Activated naive CD4-positive, alpha-beta T cell treated with anti-CD3 and anti-CD28 coated beads for 36 hours (primary cell): ENCODE measurements at regions of chr7 and their contacts with region 1.

Region 1: GRCh38 chr7:129163875-129164544 is 19.5 kb downstream of the TSPAN33 start:
- DNase-seq: peak; percentile 21
- H3K4me3 Mint-ChIP-seq: no peak overlapping the region
- H3K27ac Mint-ChIP-seq: no peak overlapping the region
- H3K4me1 Mint-ChIP-seq: peaks cover 4% of the 10 kb centered on the region
- H3K27me3 Mint-ChIP-seq: no peaks in the 10 kb centered on the region

Region 2: DNA sequence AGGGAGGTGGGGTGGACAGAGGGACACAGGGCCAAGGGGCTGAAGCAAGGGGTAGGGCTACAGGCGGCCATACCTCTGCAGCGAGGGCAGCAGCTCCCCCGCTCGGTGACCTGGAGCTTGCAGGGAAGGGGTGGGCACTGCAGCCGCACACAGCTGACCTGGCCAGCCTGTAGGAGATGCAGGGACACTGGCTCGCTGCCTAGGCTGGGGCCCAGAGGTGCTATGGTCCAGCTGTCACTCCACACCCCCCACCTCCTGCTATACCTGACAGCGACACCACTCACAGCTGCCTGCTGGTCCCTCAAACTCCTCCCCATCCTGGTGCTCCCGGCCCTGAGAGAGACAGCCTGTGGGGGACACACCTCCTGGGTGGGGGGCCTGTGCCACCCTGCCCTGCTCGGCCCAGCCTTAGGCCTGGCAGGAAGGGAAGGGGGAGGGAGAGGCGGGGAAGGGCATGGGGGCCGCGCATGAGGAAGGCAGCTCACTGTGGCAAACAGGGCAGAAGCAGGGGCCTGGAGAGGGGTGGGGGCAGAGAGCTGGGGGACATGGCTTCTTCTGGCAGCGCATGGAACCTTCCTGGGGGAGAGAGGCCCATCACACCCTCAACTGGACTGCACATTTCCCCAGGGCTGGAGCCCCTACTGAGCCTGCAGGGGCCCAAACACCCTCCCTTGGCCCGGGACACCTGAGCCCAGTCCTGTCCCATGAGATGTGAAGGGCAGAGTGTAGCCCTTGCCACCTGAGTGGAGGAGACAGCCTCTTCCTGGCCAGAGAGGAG is 277.4 kb before region 1 on chr7:
- CTCF ChIA-PET with region 1: no interaction called
- intact Hi-C with region 1: no loop called
- DNase-seq: no peak
- H3K4me3 Mint-ChIP-seq: no peak overlapping the region
- H3K27ac Mint-ChIP-seq: no peak overlapping the region
- H3K4me1 Mint-ChIP-seq: no peaks in the 10 kb centered on the region
- H3K27me3 Mint-ChIP-seq: peaks cover 10% of the 10 kb centered on the region

Region 3: DNA sequence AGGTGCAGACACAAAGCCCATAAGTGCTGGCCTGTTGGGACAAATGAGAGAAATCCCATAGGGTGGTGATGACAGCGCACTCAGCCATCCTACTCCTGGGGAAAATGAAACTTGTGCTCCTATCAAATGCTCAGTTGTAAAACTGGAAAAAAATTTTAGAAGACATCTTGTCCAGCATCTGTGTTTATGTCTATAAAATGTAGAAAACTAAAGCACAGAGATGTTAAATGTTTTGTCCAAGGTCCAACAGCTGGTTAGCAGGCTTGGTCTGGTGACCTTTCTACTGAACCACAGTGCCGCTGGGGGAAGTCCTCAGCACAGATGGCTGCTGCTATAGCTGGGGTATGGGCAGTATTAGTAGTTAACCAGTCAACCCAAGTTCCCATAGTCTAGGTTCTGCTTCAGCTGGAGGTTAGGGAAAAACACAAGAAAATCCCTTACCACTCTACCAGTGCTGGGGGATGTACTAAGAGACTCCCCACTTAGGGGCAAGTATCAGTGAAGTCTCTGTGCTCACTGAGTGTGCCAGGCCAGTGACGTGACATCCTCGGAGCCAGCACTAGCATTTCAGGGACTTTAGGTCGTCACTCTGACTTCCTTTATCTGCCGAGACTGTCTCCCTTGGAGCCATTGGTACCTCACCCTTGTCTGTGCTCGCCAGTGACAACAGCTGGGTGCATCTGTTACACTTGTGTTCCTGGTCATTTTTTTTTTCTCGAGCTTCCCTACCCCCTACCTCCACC is 17.6 kb before region 1 on chr7:
- CTCF ChIA-PET with region 1: interaction called, 17 read pairs
- intact Hi-C with region 1: no loop called
- DNase-seq: no peak
- H3K4me3 Mint-ChIP-seq: peak overlapping the region; percentile 77
- H3K27ac Mint-ChIP-seq: no peak overlapping the region
- H3K4me1 Mint-ChIP-seq: peaks cover 19% of the 10 kb centered on the region
- H3K27me3 Mint-ChIP-seq: peaks cover 7% of the 10 kb centered on the region

Region 4: GRCh38 chr7:129188372-129188891 is 24.4 kb after region 1 on chr7 and contains the start of gene SMO:
- CTCF ChIA-PET with region 1: interaction called, 11 read pairs
- intact Hi-C with region 1: no loop called
- DNase-seq: no peak
- H3K4me3 Mint-ChIP-seq: peak within 1 kb of the TSS; percentile 60
- H3K27ac Mint-ChIP-seq: no peak within 1 kb of the TSS
- H3K4me1 Mint-ChIP-seq: peaks cover 5% of the 10 kb centered on the region
- H3K27me3 Mint-ChIP-seq: peaks cover 47% of the 10 kb centered on the region
- total RNA-seq, gene SMO: 0.20 to 0.43 TPM